Vagina (tissue), 2 donors: ENCODE measurements at regions of chr9 and their contacts with region 1.

Region 1: DNA sequence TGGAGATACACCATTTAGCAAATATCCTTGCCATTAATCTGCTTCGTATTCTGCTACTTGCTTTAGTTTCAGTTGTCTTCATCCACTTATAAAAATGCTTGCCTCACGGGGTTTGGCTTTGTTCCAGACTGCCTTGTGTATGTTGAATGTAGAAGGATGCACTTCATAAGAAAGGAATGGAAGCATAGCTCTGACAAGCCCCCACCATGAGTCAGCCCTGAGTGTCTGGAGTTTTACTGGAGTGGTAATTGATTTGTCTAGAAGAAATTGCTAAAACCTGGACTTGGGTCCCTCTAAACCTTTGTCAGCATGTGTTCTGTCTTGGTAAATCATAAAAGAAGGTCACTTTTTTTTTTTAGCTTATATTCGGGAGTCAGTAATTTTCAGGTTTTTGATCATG is 4.6 kb downstream of the TEX48 start:
- DNase-seq: no peak
- H3K4me3 ChIP-seq: no peak overlapping the region
- H3K27ac ChIP-seq: no peak overlapping the region
- H3K4me1 ChIP-seq: no peaks in the 10 kb centered on the region
- H3K27me3 ChIP-seq: no peaks in the 10 kb centered on the region
- CTCF ChIP-seq: no peak
- POLR2A ChIP-seq: no peak

Region 2: DNA sequence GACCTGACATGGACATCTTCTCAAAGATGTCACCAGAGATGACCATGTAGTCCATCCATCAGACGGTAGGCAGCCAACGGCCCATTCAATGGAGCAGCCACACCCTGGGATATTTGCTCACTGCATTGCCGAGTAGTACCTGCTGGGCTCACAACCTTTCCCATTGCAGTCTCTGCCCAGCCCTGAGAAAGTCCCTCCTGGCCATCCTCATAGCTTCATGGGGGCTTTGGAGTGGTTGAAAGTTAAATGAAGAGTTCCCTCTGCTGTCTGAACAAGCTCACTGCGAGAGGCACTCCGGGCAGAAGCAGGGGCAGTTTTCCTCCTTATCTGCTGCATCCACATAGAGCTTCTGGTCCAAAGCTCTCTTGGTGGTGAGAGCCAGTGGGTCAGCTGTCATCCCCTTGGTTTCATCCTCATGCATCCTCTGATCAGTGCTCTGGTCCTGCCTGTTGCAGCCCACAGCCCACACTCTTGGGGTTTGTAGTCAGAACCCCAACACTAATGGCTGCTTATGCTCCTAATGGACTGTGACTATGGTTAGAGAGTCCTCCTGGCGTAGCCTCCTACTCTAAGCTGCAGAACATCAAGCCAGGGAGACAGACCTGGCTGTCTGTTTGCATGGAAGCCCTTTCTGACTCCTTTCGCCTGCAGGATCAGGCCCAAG is 229.6 kb after region 1 on chr9:
- intact Hi-C with region 1: loop called (anchors 10 kb)
- DNase-seq: no peak
- H3K4me3 ChIP-seq: no peak overlapping the region
- H3K27ac ChIP-seq: no peak overlapping the region
- H3K4me1 ChIP-seq: no peaks in the 10 kb centered on the region
- H3K27me3 ChIP-seq: no peaks in the 10 kb centered on the region
- CTCF ChIP-seq: peak in 2 of 3 experiments; percentile 34 to 49
- POLR2A ChIP-seq: no peak